MCF 10A (cell line): ENCODE measurements at regions of chr1 and their contacts with region 1.

Region 1: DNA sequence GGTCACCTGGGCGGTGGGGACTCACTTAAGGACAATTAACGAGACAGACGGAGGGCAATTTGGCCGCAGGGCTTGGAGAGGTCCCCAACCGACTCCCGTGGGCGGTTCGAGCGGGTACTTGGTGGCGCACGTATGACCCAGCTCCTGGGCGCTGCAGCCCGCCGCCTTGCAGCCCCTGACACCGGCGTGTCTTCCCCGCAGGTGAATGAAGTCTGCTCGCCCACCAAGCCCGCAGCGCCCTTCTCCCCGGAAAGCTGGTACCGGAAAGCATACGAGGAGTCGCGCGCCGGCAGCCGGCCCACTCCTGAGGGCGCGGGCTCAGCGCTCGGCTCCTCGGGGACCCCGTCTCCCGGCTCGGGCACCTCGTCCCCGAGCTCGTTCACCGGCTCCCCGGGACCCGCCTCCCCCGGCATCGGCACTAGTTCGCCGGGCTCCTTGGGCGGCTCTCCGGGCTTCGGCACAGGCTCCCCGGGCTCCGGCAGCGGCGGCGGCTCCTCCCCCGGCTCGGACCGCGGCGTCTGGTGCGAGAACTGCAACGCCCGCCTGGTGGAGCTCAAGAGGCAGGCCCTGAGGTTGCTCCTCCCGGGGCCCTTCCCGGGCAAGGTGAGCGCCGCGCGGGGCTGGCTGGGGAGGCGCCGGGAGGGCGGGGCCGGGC is 1.4 kb downstream of the KIF26B start:
- DNase-seq: peak; percentile 93
- H3K4me3 Mint-ChIP-seq: peak overlapping the region; percentile 79
- H3K27ac Mint-ChIP-seq: no peak overlapping the region
- H3K4me1 Mint-ChIP-seq: peaks cover 17% of the 10 kb centered on the region
- H3K27me3 Mint-ChIP-seq: peaks cover 38% of the 10 kb centered on the region
- CTCF ChIP-seq: peak; percentile 99

Region 2: DNA sequence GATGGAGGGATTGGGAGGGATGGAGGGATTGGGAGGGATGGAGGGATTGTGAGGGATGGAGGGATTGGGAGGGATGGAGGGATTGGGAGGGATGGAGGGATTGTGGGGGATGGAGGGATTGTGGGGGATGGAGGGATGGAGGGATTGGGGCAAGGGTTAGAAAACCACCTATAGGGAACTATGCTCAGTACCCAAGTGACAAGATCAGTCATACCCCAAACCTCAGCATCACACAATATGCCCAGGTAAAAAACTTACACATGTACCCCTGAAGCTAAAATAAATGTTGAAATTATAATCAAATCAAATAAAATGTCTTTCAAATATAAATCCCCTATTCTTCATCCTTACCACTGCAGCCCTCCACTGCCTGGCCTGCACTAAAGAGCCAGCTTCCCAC is 219.1 kb before region 1 on chr1:
- CTCF ChIA-PET with region 1: no interaction called
- POLR2A ChIA-PET with region 1: no interaction called
- intact Hi-C with region 1: no loop called
- DNase-seq: no peak
- H3K4me3 Mint-ChIP-seq: no peak overlapping the region
- H3K27ac Mint-ChIP-seq: no peak overlapping the region
- H3K4me1 Mint-ChIP-seq: no peaks in the 10 kb centered on the region
- H3K27me3 Mint-ChIP-seq: no peaks in the 10 kb centered on the region
- CTCF ChIP-seq: no peak

Region 3: GRCh38 chr1:244989813-244990212 is 166.4 kb before region 1 on chr1:
- CTCF ChIA-PET with region 1: no interaction called
- POLR2A ChIA-PET with region 1: no interaction called
- intact Hi-C with region 1: no loop called
- DNase-seq: peak; percentile 77
- H3K4me3 Mint-ChIP-seq: no peak overlapping the region
- H3K27ac Mint-ChIP-seq: peak overlapping the region; percentile 17
- H3K4me1 Mint-ChIP-seq: peaks cover 24% of the 10 kb centered on the region
- H3K27me3 Mint-ChIP-seq: no peaks in the 10 kb centered on the region
- CTCF ChIP-seq: no peak

Region 4: GRCh38 chr1:245166471-245166885 is 10.3 kb after region 1 on chr1:
- CTCF ChIA-PET with region 1: interaction called, 42 read pairs
- POLR2A ChIA-PET with region 1: interaction called, 3 read pairs
- intact Hi-C with region 1: no loop called
- DNase-seq: no peak
- H3K4me3 Mint-ChIP-seq: peak overlapping the region; percentile 1
- H3K27ac Mint-ChIP-seq: no peak overlapping the region
- H3K4me1 Mint-ChIP-seq: peaks cover 12% of the 10 kb centered on the region
- H3K27me3 Mint-ChIP-seq: peaks cover 34% of the 10 kb centered on the region
- CTCF ChIP-seq: no peak

Region 5: DNA sequence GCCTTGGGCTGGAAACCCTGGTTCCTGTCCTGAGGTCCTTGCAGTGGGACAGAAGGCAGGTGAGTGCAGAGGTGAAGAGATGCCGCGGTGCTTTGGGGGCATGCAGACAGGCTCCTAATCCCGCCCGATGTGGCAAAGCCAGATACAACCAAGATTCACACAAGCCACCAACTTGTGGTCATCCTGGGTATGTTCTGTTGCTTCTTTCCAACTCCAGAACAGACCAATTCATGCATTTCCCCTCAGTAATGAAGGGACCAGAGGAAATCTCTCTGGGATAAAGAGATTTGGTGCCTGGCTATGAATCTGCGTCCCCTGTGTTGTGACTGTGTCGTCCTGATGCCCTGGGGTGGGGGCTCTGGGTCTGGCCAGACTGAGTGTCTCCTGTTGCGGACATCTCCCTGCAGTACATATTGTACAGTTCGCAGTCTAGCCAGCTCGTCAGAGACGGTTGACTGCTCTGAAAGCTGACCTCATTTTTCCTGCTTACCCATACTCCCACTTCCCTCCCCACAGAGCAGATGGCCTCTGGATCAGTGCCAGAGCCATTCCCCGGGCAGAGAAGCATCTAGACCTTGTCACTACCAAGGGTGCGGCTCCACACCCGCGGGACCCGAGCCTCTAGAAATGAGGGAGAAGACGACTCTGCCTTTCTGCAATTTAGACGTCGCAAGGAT is 214.8 kb after region 1 on chr1:
- CTCF ChIA-PET with region 1: no interaction called
- POLR2A ChIA-PET with region 1: no interaction called
- intact Hi-C with region 1: no loop called
- DNase-seq: no peak
- H3K4me3 Mint-ChIP-seq: no peak overlapping the region
- H3K27ac Mint-ChIP-seq: no peak overlapping the region
- H3K4me1 Mint-ChIP-seq: no peaks in the 10 kb centered on the region
- H3K27me3 Mint-ChIP-seq: peaks cover 16% of the 10 kb centered on the region
- CTCF ChIP-seq: no peak

Region 6: GRCh38 chr1:245500546-245500945 is 344.3 kb after region 1 on chr1:
- CTCF ChIA-PET with region 1: interaction called, 19 read pairs
- POLR2A ChIA-PET with region 1: interaction called, 12 read pairs
- intact Hi-C with region 1: no loop called
- DNase-seq: peak; percentile 99
- H3K4me3 Mint-ChIP-seq: no peak overlapping the region
- H3K27ac Mint-ChIP-seq: no peak overlapping the region
- H3K4me1 Mint-ChIP-seq: peaks cover 20% of the 10 kb centered on the region
- H3K27me3 Mint-ChIP-seq: peaks cover 24% of the 10 kb centered on the region
- CTCF ChIP-seq: peak; percentile 16

Region 7: GRCh38 chr1:245788269-245788668 is 632.1 kb after region 1 on chr1:
- CTCF ChIA-PET with region 1: interaction called, 4 read pairs
- POLR2A ChIA-PET with region 1: no interaction called
- intact Hi-C with region 1: loop called (anchors 5 kb)
- DNase-seq: peak; percentile 87
- H3K4me3 Mint-ChIP-seq: no peak overlapping the region
- H3K27ac Mint-ChIP-seq: peak overlapping the region; percentile 78
- H3K4me1 Mint-ChIP-seq: peaks cover 20% of the 10 kb centered on the region
- H3K27me3 Mint-ChIP-seq: no peaks in the 10 kb centered on the region
- CTCF ChIP-seq: no peak

Region 8: DNA sequence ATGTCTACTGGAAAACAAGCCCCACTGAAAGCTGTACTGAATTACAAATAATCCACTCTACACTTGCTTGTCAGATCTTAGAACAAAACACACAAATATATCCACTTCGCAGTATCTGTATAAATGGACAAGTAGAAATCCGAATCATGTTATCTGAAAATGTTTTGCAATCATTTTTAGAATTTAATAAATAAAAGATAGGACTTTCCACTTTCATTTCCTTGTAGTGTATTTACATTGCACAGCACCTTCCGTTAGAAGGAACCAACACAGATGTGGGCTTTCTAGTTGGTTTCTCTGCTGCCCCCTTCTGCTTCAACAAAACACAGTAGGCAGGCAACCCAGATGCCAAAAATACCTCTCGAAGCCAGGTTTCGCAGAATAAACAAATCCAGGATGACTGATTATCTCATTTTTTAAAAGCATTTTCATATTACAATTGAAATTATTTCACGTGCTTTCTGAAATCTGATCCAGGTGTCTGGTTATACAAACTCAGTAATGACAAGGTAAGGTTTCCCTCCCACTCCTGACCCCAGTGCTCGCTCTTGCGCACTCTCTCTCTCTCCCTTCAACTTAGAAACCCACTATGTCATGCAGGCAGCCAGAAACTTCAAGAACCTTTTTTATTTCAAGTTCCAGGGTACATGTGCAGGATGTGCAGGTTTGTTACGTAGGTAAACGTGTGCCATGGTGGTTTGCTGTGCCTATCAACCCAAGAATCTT is 961.0 kb after region 1 on chr1:
- CTCF ChIA-PET with region 1: interaction called, 3 read pairs
- POLR2A ChIA-PET with region 1: no interaction called
- intact Hi-C with region 1: loop called (anchors 1 kb)
- DNase-seq: peak; percentile 61
- H3K4me3 Mint-ChIP-seq: no peak overlapping the region
- H3K27ac Mint-ChIP-seq: no peak overlapping the region
- H3K4me1 Mint-ChIP-seq: no peaks in the 10 kb centered on the region
- H3K27me3 Mint-ChIP-seq: no peaks in the 10 kb centered on the region
- CTCF ChIP-seq: peak; percentile 45

Region 9: DNA sequence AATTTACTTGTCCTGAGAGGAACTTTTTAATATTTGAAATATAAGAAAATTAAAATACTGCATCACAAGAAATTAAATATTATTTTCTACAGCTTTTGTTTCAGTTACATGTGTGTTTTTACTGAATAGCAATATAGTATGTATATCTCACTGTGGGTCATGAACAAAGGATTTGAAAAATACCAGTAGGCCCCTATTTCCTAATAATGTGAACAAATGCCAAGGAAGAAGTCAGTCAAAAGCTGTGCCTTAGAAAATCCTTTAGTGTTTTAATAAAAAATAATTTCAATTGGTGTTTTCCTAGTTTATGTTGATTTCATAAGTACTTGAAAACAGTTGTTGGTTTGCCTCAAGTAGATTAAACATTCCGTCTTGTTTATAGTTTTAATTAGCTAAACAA is 1304.2 kb after region 1 on chr1:
- CTCF ChIA-PET with region 1: interaction called, 16 read pairs
- POLR2A ChIA-PET with region 1: interaction called, 4 read pairs
- intact Hi-C with region 1: no loop called
- DNase-seq: no peak
- H3K4me3 Mint-ChIP-seq: no peak overlapping the region
- H3K27ac Mint-ChIP-seq: no peak overlapping the region
- H3K4me1 Mint-ChIP-seq: peaks cover 13% of the 10 kb centered on the region
- H3K27me3 Mint-ChIP-seq: no peaks in the 10 kb centered on the region
- CTCF ChIP-seq: no peak

Region 10: GRCh38 chr1:246753670-246754535 is 1597.7 kb after region 1 on chr1:
- CTCF ChIA-PET with region 1: interaction called, 3 read pairs
- POLR2A ChIA-PET with region 1: no interaction called
- intact Hi-C with region 1: loop called (anchors 10 kb)
- DNase-seq: peak; percentile 85
- H3K4me3 Mint-ChIP-seq: no peak overlapping the region
- H3K27ac Mint-ChIP-seq: no peak overlapping the region
- H3K4me1 Mint-ChIP-seq: peaks cover 10% of the 10 kb centered on the region
- H3K27me3 Mint-ChIP-seq: no peaks in the 10 kb centered on the region
- CTCF ChIP-seq: peak; percentile 98